ENCODE measurements at regions of chr9 and their contacts with region 1.

Region 1: GRCh38 chr9:97615439-97616072 is 17.6 kb downstream of the TSTD2 start:
- DNase-seq: no peak
- ATAC-seq: peak; percentile 78
- H3K4me3 ChIP-seq: no peak overlapping the region
- H3K27ac ChIP-seq: no peak overlapping the region
- H3K4me1 ChIP-seq: no peaks in the 10 kb centered on the region
- H3K27me3 ChIP-seq: no peaks in the 10 kb centered on the region
- CTCF ChIP-seq: peak; percentile 89

Region 2: GRCh38 chr9:97468658-97469448 is 146.7 kb before region 1 on chr9:
- intact Hi-C with region 1: loop called (anchors 10 kb)
- DNase-seq: peak; percentile 55
- ATAC-seq: peak; percentile 96 to 98
- H3K4me3 ChIP-seq: no peak overlapping the region
- H3K27ac ChIP-seq: peak overlapping the region; percentile 3
- H3K4me1 ChIP-seq: peaks cover 11% of the 10 kb centered on the region
- H3K27me3 ChIP-seq: no peaks in the 10 kb centered on the region
- CTCF ChIP-seq: peak; percentile 84

Region 3: GRCh38 chr9:97759581-97760288 is 144.2 kb after region 1 on chr9:
- intact Hi-C with region 1: no loop called
- DNase-seq: no peak
- ATAC-seq: no peak
- H3K4me3 ChIP-seq: no peak overlapping the region
- H3K27ac ChIP-seq: no peak overlapping the region
- H3K4me1 ChIP-seq: no peaks in the 10 kb centered on the region
- H3K27me3 ChIP-seq: peaks cover 17% of the 10 kb centered on the region
- CTCF ChIP-seq: no peak

Measured in lower lobe of right lung (tissue), 2 donors.